ENCODE measurements at regions of chr3 and their contacts with region 1.

Region 1: DNA sequence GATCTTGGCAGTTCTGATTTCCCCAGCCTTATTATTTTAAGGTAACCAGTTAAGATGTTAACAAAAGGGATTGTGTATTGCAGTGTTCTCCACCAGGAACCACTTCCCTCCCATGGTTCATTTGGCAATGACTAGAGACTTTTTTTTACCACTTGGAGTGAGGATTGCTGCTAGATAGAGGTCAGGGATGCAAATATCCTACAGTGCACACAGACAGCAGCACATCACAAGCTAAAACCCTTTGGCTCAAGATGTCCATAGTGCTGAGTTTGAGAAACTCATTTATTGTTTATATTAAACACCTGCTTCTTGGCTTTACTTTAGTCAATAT is 24.1 kb upstream of the EBLN2 start:
- DNase-seq: no peak
- ATAC-seq: peak in 3 of 8 donors; percentile 43 to 48 (median 46)
- H3K4me3 ChIP-seq: no peak overlapping the region
- H3K27ac ChIP-seq: peak overlapping the region in 1 of 10 donors; percentile 50
- H3K4me1 ChIP-seq: peaks cover 0 to 97% (median 70%) of the 10 kb centered on the region in 9 donors
- H3K27me3 ChIP-seq: no peaks in the 10 kb centered on the region
- CTCF ChIP-seq: no peak

Region 2: DNA sequence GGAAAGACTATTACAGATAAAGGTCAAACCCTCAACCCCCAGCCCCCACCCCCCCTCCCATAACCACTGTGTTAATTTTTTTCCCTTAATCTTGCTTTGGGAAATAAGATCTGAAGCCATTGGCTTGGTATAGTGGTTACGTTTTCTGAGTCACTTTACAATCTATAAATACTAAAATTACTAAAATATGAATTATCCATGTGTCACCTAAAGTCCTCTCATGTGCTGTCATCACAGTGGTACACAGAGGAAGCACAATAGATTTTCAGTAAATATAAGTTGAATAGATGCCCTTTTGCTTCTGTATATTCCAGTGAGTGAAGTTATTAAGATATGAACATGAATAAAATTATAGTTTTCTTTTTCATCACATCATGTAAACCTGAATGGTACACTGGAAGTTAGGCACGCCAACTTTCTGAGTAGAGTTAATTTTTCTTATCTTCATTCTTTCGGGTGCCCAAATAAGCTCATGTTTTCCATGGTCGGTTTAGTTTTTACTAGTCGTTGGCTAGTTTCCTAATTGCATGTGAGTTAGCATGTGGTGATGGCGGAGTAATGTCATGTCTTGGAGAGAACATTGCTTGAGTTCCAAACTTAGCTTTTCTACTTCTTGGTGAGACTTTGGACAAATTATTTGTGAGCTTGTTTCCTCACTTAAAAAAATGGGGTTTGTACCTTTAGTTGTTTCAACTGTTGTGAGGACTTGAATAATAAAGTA is 29.2 kb before region 1 on chr3:
- intact Hi-C with region 1: loop called in 2 of 10 experiments (anchors 5 kb)
- DNase-seq: no peak
- ATAC-seq: no peak
- H3K4me3 ChIP-seq: no peak overlapping the region
- H3K27ac ChIP-seq: peak overlapping the region in 1 of 10 donors; percentile 14
- H3K4me1 ChIP-seq: peaks cover 0 to 83% (median 41%) of the 10 kb centered on the region in 9 donors
- H3K27me3 ChIP-seq: no peaks in the 10 kb centered on the region
- CTCF ChIP-seq: no peak